Endothelial cell of umbilical vein (primary cell): ENCODE measurements at regions of chr6 and their contacts with region 1.

Region 1: DNA sequence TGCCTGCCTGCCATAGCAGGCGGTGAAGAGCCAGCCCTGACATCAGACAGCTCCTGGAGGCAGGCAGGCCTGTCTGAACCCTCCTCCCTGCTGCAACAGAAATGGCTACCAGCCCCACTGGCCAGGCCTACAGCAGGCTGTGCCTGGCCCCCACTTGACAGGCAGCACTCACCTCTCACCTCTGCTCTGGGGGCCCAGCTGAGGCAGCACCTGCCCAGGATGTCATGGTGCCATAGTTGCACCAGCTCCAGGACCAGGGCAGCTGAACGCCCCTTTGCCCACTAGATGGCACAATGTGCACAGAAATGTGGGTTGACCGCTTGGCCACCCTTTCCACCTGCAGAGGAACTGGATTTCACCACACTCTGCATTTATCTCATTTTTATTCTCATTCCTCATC is 30.6 kb downstream of the MRPL14 start:
- DNase-seq: peak; percentile 66
- H3K4me3 ChIP-seq: no peak overlapping the region
- H3K27ac ChIP-seq: no peak overlapping the region
- H3K4me1 ChIP-seq: no peaks in the 10 kb centered on the region
- H3K27me3 ChIP-seq: no peaks in the 10 kb centered on the region
- CTCF ChIP-seq: peak; percentile 77 to 83
- POLR2A ChIP-seq: no peak

Region 2: DNA sequence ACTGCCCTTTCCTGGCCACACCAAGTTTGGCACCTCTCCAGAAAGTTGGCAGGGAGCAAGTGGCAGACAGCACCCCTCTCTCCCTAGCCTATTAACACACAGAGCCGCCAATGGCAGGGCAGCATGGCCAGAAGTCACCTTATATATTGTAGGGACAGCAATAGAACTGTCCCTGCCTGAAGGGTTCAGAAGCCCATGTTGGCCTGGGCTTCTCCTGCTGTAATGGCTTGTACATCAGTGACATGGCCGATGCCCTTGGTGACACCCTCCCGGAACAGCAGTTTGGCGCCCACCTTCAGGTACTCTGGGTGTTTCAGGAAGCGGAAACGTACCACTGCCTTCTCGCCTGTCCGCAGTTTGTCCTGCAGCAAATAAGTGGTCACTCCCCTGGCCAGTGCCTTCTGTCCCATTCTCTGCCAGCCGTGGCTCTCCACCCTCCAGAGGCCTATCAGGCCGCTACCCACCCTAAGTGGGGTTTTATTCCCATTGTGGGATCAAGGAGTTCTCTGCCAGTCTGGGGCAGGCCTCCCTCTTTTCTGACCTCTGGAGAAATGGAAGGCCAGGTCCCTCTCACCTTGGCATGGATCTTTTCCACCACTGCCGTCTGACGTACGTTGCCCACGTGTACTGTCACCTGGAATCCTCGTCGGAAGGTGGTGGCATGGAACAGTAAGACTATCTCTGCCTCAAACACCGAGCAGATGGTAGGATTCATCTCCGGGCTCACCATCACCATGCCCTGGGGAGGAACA is 475.0 kb before region 1 on chr6:
- CTCF ChIA-PET with region 1: no interaction called
- POLR2A ChIA-PET with region 1: no interaction called
- dilution Hi-C with region 1: no loop called
- intact Hi-C with region 1: no loop called
- DNase-seq: no peak
- H3K4me3 ChIP-seq: no peak overlapping the region
- H3K27ac ChIP-seq: no peak overlapping the region
- H3K4me1 ChIP-seq: peaks cover 4% of the 10 kb centered on the region
- H3K27me3 ChIP-seq: no peaks in the 10 kb centered on the region
- CTCF ChIP-seq: no peak
- POLR2A ChIP-seq: no peak

Region 3: GRCh38 chr6:43635387-43636307 is 461.0 kb before region 1 on chr6 and contains the start of gene MAD2L1BP:
- CTCF ChIA-PET with region 1: no interaction called
- POLR2A ChIA-PET with region 1: interaction called, 10 read pairs
- dilution Hi-C with region 1: no loop called
- intact Hi-C with region 1: no loop called
- DNase-seq: peak; percentile 76
- H3K4me3 ChIP-seq: peak within 1 kb of the TSS; percentile 71 to 91 (median 81)
- H3K27ac ChIP-seq: peak within 1 kb of the TSS; percentile 57
- H3K4me1 ChIP-seq: peaks cover 10% of the 10 kb centered on the region
- H3K27me3 ChIP-seq: no peaks in the 10 kb centered on the region
- CTCF ChIP-seq: no peak
- POLR2A ChIP-seq: peak; percentile 98
- total RNA-seq, gene MAD2L1BP: 32.3 and 34.9 TPM in 2 replicates

Region 4: DNA sequence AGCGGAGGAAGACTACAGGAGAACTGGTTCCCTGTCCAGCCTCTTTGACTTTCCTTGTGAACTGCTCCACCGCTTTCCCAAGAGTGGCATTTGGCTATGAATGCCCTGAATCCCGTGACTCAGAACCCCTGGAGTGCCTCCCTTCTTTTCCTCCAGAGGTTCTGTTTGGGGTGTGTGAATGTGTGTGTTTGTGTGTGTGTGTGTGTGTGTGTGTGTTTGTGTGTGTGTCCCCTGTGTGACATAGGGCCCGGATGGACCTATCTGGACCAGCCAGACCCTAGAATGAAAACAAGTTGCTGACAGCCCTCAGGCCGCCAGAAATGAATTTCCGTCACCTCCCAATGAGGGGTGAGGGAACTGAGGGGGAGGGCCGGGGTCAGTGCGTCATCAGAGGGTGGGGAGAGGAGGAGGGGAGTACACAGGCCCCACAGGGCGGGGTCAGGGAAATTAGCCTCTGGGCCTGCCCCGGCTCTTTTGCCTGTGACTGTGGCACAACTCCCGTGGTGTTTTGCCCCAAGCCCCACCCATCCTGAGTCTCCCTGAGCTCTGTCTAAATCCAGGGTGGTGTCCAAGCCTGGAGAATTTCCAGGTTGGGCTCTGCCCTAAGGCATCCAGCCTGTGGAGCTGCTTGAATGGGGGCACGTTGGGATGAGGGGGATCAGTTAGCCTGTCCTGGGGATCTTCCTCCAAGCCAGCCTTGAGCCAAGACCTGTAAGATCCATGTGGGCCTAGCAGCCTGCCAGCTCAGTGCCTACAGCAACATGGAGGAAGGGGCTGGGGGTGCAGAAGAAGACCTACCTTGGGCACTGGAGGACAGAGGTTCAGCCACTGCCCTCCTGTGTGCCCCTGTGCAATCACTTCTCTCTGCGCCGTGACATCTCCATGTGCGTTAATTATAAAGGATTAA is 393.8 kb before region 1 on chr6:
- CTCF ChIA-PET with region 1: no interaction called
- POLR2A ChIA-PET with region 1: no interaction called
- dilution Hi-C with region 1: no loop called
- intact Hi-C with region 1: no loop called
- DNase-seq: peak; percentile 91
- H3K4me3 ChIP-seq: no peak overlapping the region
- H3K27ac ChIP-seq: peak overlapping the region; percentile 66
- H3K4me1 ChIP-seq: peaks cover 67% of the 10 kb centered on the region
- H3K27me3 ChIP-seq: no peaks in the 10 kb centered on the region
- CTCF ChIP-seq: no peak
- POLR2A ChIP-seq: no peak

Region 5: GRCh38 chr6:44127186-44128019 is 30.8 kb after region 1 on chr6 and contains the starts of genes MRPL14 and TMEM63B:
- CTCF ChIA-PET with region 1: interaction called, 62 read pairs
- POLR2A ChIA-PET with region 1: no interaction called
- dilution Hi-C with region 1: no loop called
- intact Hi-C with region 1: loop called (anchors 1 kb)
- DNase-seq: peak; percentile 81
- H3K4me3 ChIP-seq: peak within 1 kb of the TSS; percentile 88 to 90 (median 89)
- H3K27ac ChIP-seq: peak within 1 kb of the TSS; percentile 74
- H3K4me1 ChIP-seq: peaks cover 46% of the 10 kb centered on the region
- H3K27me3 ChIP-seq: no peaks in the 10 kb centered on the region
- CTCF ChIP-seq: no peak
- POLR2A ChIP-seq: peak; percentile 94
- total RNA-seq, gene MRPL14: 62.4 and 68.1 TPM in 2 replicates
- total RNA-seq, gene TMEM63B: 39.4 and 49.7 TPM in 2 replicates

Region 6: GRCh38 chr6:44156494-44157151 is 60.0 kb after region 1 on chr6:
- CTCF ChIA-PET with region 1: interaction called, 95 read pairs
- POLR2A ChIA-PET with region 1: no interaction called
- dilution Hi-C with region 1: no loop called
- intact Hi-C with region 1: loop called (anchors 1 kb)
- DNase-seq: no peak
- H3K4me3 ChIP-seq: no peak overlapping the region
- H3K27ac ChIP-seq: no peak overlapping the region
- H3K4me1 ChIP-seq: no peaks in the 10 kb centered on the region
- H3K27me3 ChIP-seq: no peaks in the 10 kb centered on the region
- CTCF ChIP-seq: no peak
- POLR2A ChIP-seq: no peak

Region 7: GRCh38 chr6:44172731-44173500 is 76.3 kb after region 1 on chr6:
- CTCF ChIA-PET with region 1: interaction called, 14 read pairs
- POLR2A ChIA-PET with region 1: no interaction called
- dilution Hi-C with region 1: no loop called
- intact Hi-C with region 1: loop called (anchors 1 kb)
- DNase-seq: peak; percentile 71
- H3K4me3 ChIP-seq: no peak overlapping the region
- H3K27ac ChIP-seq: no peak overlapping the region
- H3K4me1 ChIP-seq: peaks cover 19% of the 10 kb centered on the region
- H3K27me3 ChIP-seq: peaks cover 0 to 9% of the 10 kb centered on the region in 2 experiments
- CTCF ChIP-seq: peak; percentile 91 to 96
- POLR2A ChIP-seq: no peak

Region 8: DNA sequence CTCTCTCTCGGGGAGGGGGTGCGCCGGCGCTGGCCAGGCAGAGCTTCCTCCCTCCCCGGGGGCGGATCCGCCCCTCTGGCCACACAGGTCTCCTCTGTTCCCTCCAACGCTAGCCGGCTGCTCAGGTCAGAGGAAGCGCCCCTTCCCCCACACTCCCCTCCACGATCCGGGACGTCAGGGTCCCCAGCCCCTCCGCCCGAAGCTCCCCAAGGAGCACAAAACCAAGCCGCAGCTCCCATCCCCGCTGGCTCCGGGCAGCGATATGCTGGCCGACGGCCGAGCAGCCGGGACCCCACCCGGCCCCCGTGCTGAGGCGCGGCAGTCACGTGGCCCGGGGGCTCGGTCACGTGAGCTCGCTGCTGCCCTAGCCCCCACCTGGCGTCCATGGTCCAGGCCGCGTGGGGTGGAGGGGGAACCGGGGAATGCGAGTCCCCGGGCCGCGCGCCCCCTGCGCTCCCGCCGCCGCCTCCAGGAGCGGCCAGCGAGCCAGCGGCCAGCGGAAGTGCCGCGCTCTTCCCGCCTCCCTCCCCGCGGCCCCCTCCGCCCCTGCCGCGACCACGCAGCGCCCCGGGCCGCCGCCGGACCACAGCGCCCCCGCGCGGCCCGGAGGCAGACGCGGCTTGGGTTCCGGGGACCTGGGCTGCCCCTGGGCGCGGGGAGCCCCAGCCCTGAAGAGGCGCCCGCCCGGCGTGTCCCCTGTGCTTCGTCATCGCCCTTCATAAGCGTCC is 160.6 kb after region 1 on chr6 and contains the start of gene SLC35B2:
- CTCF ChIA-PET with region 1: interaction called, 16 read pairs
- POLR2A ChIA-PET with region 1: interaction called, 3 read pairs
- dilution Hi-C with region 1: no loop called
- intact Hi-C with region 1: no loop called
- DNase-seq: peak; percentile 76
- H3K4me3 ChIP-seq: peak within 1 kb of the TSS; percentile 67 to 89 (median 74)
- H3K27ac ChIP-seq: peak within 1 kb of the TSS; percentile 49
- H3K4me1 ChIP-seq: peaks cover 14% of the 10 kb centered on the region
- H3K27me3 ChIP-seq: no peaks in the 10 kb centered on the region
- CTCF ChIP-seq: peak; percentile 65 to 66
- POLR2A ChIP-seq: peak; percentile 79
- total RNA-seq, gene SLC35B2: 53.4 and 53.9 TPM in 2 replicates

Region 9: DNA sequence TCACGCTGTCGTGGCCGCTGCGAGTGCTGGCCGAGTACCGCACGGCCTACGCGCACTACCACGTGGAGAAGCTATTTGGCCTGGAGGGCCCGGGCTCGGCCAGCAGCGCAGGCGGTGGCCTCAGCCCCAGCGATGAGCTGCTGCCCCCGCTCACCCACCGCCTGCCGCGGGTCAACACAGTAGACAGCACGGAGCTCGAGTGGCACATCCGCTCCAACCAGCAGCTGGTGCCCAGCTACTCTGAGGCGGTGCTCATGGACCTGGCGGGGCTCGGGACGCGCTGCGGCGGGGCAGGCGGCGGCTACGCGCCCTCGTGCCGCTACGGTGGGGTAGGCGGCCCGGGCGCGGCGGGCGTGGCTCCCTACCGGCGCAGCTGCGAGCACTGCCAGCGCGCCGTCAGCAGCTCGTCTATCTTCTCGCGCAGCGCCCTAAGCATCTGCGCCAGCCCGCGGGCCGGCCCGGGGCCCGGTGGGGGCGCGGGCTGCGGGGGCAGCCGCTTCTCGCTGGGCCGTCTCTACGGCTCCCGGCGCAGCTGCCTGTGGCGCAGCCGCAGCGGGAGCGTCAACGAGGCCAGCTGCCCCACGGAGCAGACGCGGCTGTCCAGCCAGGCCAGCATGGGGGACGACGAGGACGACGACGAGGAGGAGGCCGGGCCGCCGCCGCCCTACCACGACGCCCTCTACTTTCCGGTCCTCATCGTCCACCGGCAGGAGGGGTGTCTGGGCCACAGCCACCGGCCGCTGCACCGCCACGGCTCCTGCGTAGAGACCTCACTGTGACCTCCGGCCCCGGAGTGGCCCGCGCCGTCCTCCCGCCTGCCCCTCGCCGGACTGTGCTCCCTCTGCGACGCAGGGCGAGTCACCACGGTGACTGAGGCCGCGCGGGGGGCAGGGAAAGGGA is 179.4 kb after region 1 on chr6:
- CTCF ChIA-PET with region 1: no interaction called
- POLR2A ChIA-PET with region 1: no interaction called
- dilution Hi-C with region 1: no loop called
- intact Hi-C with region 1: no loop called
- DNase-seq: no peak
- H3K4me3 ChIP-seq: no peak overlapping the region
- H3K27ac ChIP-seq: no peak overlapping the region
- H3K4me1 ChIP-seq: no peaks in the 10 kb centered on the region
- H3K27me3 ChIP-seq: peaks cover 28 to 42% of the 10 kb centered on the region in 2 experiments
- CTCF ChIP-seq: no peak
- POLR2A ChIP-seq: no peak

Region 10: DNA sequence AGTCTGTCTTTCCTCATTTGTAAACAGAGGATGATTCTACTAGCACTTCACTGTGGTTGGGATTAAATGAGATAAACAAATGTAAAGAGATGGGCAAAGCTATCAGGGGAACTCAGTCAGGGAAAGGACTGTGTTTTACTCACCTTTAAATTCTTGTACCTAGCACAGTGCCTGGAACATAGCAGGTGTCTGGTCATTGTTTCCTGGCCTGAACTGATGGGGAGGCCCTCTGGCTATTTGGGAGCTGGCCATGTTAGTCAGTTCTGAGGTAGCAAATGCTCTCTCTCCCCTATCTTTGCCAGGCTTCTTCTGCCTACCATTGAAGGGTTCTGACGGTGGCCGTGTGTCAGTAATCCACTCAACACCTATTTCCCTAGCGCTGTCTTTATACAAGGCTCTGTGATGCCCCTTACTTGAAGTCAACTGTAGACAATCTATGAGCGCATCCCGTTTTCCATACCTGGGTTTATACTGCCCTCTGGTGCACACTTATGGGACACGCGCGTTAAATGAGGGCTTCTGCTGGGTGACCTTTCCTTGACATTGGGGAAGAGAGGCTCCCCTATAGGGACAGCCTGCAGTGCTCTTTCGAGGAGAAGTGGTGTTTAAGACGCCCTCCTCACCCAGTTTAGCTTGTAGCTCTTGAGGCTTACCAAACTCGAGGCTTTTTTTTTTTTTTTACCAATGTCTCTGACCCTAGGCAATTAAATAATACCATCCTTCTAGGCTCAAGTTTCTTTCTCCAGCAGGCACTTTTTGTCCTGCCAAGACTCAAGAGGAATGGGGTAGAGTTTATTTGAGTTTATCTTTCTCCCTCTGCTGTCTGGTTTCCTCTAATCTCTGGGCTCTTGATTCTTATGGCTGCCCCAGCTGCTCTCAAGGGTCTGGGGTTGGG is 241.9 kb after region 1 on chr6:
- CTCF ChIA-PET with region 1: interaction called, 10 read pairs
- POLR2A ChIA-PET with region 1: no interaction called
- dilution Hi-C with region 1: no loop called
- intact Hi-C with region 1: loop called (anchors 2 kb)
- DNase-seq: peak; percentile 63
- H3K4me3 ChIP-seq: no peak overlapping the region
- H3K27ac ChIP-seq: no peak overlapping the region
- H3K4me1 ChIP-seq: no peaks in the 10 kb centered on the region
- H3K27me3 ChIP-seq: peaks cover 28 to 44% of the 10 kb centered on the region in 2 experiments
- CTCF ChIP-seq: peak; percentile 57 to 72
- POLR2A ChIP-seq: no peak